ENCODE measurements at regions of chr10 and their contacts with region 1.

Region 1: GRCh38 chr10:92356041-92356440 is 65.1 kb downstream of the MARCHF5 start:
- DNase-seq: no peak
- H3K4me3 ChIP-seq: no peak overlapping the region
- H3K27ac ChIP-seq: no peak overlapping the region
- H3K4me1 ChIP-seq: no peaks in the 10 kb centered on the region
- H3K27me3 ChIP-seq: no peaks in the 10 kb centered on the region
- CTCF ChIP-seq: no peak

Region 2: DNA sequence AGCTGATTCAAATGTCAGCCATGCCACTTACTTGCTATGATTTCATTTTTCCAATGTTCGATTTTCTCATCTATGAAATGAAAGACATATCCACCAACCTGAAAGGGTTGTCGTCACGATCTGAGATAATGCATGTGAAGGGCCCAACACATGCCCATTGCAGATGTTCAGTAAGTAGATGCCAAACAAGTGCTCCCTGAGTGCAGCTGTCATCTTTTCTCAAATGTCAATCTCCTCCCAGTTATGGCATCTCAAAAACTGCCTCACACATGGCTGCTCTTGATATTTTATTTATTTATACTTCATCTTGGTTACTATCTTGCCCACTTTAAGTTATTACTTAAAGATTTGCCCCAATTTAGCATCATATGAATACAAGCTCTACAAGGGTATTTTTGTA is 82.0 kb before region 1 on chr10:
- CTCF ChIA-PET with region 1: no interaction called
- dilution Hi-C with region 1: loop called (anchors 5 kb)
- in situ Hi-C with region 1: no loop called
- intact Hi-C with region 1: no loop called
- DNase-seq: no peak
- H3K4me3 ChIP-seq: no peak overlapping the region
- H3K27ac ChIP-seq: no peak overlapping the region
- H3K4me1 ChIP-seq: no peaks in the 10 kb centered on the region
- H3K27me3 ChIP-seq: no peaks in the 10 kb centered on the region
- CTCF ChIP-seq: no peak